ENCODE measurements at regions of chr3 and their contacts with region 1.

Region 1: DNA sequence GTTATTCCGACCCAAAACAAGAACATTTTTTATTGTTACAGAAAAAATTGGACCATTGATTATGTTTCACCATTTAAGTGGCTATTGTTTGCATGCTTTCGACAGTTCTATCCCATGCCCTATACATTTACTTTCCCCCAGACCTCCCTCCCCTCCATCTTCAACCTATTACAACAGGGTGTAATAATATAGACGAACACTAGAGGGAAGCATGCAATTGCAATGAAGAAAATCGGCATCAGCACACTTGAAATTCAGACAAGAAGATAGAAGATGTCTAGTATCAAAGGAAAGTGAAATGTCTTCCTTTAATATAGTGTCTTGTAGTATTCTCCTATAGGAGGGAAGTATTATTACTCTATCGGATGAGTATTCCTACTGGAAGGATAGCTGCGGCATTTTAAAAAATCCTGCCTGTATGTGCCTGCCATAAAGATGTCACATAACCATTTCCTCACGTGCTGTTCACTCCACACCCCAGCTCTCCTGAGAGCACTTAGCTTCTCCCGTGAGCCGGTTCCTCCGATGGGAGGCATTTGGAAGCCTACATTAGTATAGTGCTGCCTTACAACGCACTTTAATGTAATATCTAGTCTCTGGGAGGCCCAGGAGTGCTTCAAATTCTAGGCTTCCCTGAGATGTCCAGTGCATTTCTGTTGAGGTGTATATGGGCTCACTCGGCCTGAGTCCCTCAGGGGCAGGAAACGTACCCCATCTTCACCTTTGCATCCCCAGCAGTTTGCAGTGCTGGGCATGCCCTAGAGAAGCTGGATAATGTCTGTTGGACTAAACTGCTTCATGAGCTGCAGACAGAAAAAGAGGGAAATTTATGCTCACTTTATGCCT is 17.8 kb upstream of the ERICH6 start:
- DNase-seq: no peak
- ATAC-seq: peak; percentile 88 to 95 (median 93)
- H3K4me3 ChIP-seq: no peak overlapping the region
- H3K27ac ChIP-seq: no peak overlapping the region
- H3K4me1 ChIP-seq: no peaks in the 10 kb centered on the region
- H3K27me3 ChIP-seq: no peaks in the 10 kb centered on the region
- CTCF ChIP-seq: peak; percentile 82 to 95 (median 82)
- POLR2A ChIP-seq: no peak

Region 2: GRCh38 chr3:150787741-150788370 is 66.3 kb after region 1 on chr3:
- intact Hi-C with region 1: loop called in 1 of 2 experiments (anchors 10 kb)
- DNase-seq: peak; percentile 88 to 93 (median 90)
- ATAC-seq: peak; percentile 96 to 99 (median 99)
- H3K4me3 ChIP-seq: no peak overlapping the region
- H3K27ac ChIP-seq: no peak overlapping the region
- H3K4me1 ChIP-seq: peaks cover 0 to 3% (median 0%) of the 10 kb centered on the region in 4 donors
- H3K27me3 ChIP-seq: no peaks in the 10 kb centered on the region
- CTCF ChIP-seq: peak in 3 of 4 donors; percentile 85 to 96 (median 96)
- POLR2A ChIP-seq: no peak

Region 3: DNA sequence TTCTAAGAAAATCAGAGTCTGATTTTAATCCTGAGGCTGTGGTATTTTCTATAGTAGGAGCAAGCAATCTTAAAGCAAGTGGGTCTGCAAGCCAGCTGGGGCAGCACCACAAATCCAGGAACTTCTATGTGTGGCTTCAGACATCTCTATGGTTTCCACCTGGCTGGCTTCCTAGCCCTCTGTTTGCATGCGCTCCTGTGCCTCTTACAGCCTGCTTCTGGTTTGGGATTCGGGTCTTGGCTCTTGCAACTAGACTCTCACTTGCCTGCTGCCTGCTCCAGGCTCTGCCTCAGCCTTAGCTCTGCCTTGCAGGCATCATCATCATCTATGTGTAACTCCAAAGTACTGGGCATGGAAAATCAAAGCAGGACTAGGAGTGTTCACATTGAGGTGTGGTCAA is 140.3 kb after region 1 on chr3:
- intact Hi-C with region 1: loop called (anchors 5 kb)
- DNase-seq: no peak
- ATAC-seq: no peak
- H3K4me3 ChIP-seq: no peak overlapping the region
- H3K27ac ChIP-seq: no peak overlapping the region
- H3K4me1 ChIP-seq: no peaks in the 10 kb centered on the region
- H3K27me3 ChIP-seq: no peaks in the 10 kb centered on the region
- CTCF ChIP-seq: no peak
- POLR2A ChIP-seq: no peak

Region 4: DNA sequence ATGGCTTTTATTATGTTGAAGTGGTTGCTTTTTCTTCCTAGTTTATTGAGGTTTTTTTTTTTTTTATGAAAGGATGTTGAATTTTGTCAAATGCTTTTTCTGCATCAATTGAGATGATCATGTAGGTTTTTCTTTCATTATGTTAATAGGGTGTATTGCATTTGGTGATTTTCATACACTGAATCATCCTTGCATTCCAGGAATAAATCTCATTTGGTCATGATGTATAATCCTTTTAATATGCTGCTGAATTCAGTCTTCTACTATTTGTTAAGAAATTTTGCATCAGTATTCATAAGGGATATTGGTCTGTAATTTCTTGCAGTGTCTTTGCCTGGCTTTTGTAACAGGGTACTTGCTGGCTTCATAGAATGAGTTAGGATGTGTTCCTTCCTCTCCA is 262.6 kb after region 1 on chr3:
- intact Hi-C with region 1: no loop called
- DNase-seq: no peak
- ATAC-seq: no peak
- H3K4me3 ChIP-seq: no peak overlapping the region
- H3K27ac ChIP-seq: no peak overlapping the region
- H3K4me1 ChIP-seq: no peaks in the 10 kb centered on the region
- H3K27me3 ChIP-seq: no peaks in the 10 kb centered on the region
- CTCF ChIP-seq: no peak
- POLR2A ChIP-seq: no peak